Motor neuron (in vitro differentiated cells): ENCODE measurements at regions of chr1 and their contacts with region 1.

Region 1: DNA sequence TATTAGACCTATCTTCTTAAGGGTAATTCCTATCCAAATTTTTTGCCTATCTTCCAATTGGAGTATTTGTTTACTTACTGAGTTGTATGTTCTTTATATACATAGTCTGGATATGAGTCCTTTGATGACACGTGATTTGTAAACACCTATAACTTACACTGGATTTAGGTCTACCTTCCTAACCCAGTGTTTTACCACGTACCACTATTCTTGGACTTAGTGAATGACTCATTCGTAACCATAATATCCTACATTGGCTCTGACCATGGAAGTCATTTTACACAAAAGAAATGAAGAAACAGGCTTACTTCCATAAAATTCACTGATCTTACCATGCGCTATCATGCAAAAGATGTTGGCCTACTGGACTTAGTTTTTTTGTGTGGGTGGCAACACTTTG is 23.9 kb upstream of the ZZZ3 start:
- ATAC-seq: no peak
- H3K4me3 ChIP-seq: no peak overlapping the region
- H3K27ac ChIP-seq: no peak overlapping the region
- H3K4me1 ChIP-seq: no peaks in the 10 kb centered on the region

Region 2: GRCh38 chr1:77556045-77556444 is 150.3 kb before region 1 on chr1:
- in situ Hi-C with region 1: no loop called
- ATAC-seq: no peak
- H3K4me3 ChIP-seq: no peak overlapping the region
- H3K27ac ChIP-seq: no peak overlapping the region
- H3K4me1 ChIP-seq: peaks cover 0 to 3% of the 10 kb centered on the region in 2 donors

Region 3: GRCh38 chr1:77950873-77951272 is 244.6 kb after region 1 on chr1:
- in situ Hi-C with region 1: loop called in 1 of 9 experiments (anchors 25 kb)
- ATAC-seq: no peak
- H3K4me3 ChIP-seq: no peak overlapping the region
- H3K27ac ChIP-seq: no peak overlapping the region
- H3K4me1 ChIP-seq: no peaks in the 10 kb centered on the region